Activated CD4-positive, alpha-beta T cell treated with anti-CD3 and anti-CD28 coated beads, Interleukin-2, amount 10 ng/mL, durations not matched to agents 7 days and 5 days (primary cell): ENCODE measurements at regions of chr1 and their contacts with region 1.

Region 1: GRCh38 chr1:201870397-201870796 is 18.3 kb upstream of the SHISA4 start:
- DNase-seq: no peak
- H3K4me3 Mint-ChIP-seq: no peak overlapping the region
- H3K27ac Mint-ChIP-seq: no peak overlapping the region
- H3K4me1 Mint-ChIP-seq: peaks cover 4% of the 10 kb centered on the region
- H3K27me3 Mint-ChIP-seq: no peaks in the 10 kb centered on the region

Region 2: GRCh38 chr1:201882665-201883132 is 12.3 kb after region 1 on chr1:
- CTCF ChIA-PET with region 1: interaction called, 11 read pairs
- POLR2A ChIA-PET with region 1: no interaction called
- DNase-seq: no peak
- H3K4me3 Mint-ChIP-seq: no peak overlapping the region
- H3K27ac Mint-ChIP-seq: no peak overlapping the region
- H3K4me1 Mint-ChIP-seq: no peaks in the 10 kb centered on the region
- H3K27me3 Mint-ChIP-seq: peaks cover 13% of the 10 kb centered on the region

Region 3: GRCh38 chr1:201999625-202000238 is 129.3 kb after region 1 on chr1:
- CTCF ChIA-PET with region 1: no interaction called
- POLR2A ChIA-PET with region 1: no interaction called
- DNase-seq: peak; percentile 32
- H3K4me3 Mint-ChIP-seq: no peak overlapping the region
- H3K27ac Mint-ChIP-seq: no peak overlapping the region
- H3K4me1 Mint-ChIP-seq: no peaks in the 10 kb centered on the region
- H3K27me3 Mint-ChIP-seq: no peaks in the 10 kb centered on the region